Heart left ventricle (tissue), 16 donors: ENCODE measurements at regions of chr2 and their contacts with region 1.

Region 1: GRCh38 chr2:98412751-98413458 is 31.8 kb upstream of the INPP4A start:
- DNase-seq: peak in 2 of 5 donors; percentile 32 to 40
- ATAC-seq: peak; percentile 75 to 91 (median 88)
- H3K4me3 ChIP-seq: no peak overlapping the region
- H3K27ac ChIP-seq: no peak overlapping the region
- H3K4me1 ChIP-seq: peaks cover 0 to 5% (median 0%) of the 10 kb centered on the region in 12 donors
- H3K27me3 ChIP-seq: no peaks in the 10 kb centered on the region
- CTCF ChIP-seq: peak; percentile 65 to 90 (median 80)
- POLR2A ChIP-seq: no peak

Region 2: DNA sequence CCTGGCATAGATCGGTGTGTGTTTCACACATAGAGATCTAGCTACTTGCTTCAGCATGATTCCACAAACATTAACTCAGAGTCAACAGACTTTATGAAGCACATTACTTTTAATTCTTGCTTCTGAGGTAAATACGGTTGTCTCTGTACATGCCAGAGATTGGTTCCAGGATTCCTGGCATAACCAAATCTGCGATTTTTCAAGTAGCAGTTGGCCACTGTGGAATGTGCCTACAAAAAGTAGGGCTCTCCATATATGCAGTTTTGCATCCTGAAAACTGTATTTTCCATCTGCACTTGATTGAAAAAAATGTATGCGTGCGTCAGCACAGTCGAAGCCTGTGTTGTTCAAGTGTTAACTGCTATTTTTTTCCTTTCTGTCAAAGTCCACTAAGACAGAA is 614.5 kb before region 1 on chr2:
- intact Hi-C with region 1: no loop called
- DNase-seq: no peak
- ATAC-seq: no peak
- H3K4me3 ChIP-seq: no peak overlapping the region
- H3K27ac ChIP-seq: no peak overlapping the region
- H3K4me1 ChIP-seq: no peaks in the 10 kb centered on the region
- H3K27me3 ChIP-seq: no peaks in the 10 kb centered on the region
- CTCF ChIP-seq: no peak
- POLR2A ChIP-seq: no peak

Region 3: GRCh38 chr2:98334439-98335078 is 78.3 kb before region 1 on chr2:
- intact Hi-C with region 1: no loop called
- DNase-seq: no peak
- ATAC-seq: no peak
- H3K4me3 ChIP-seq: no peak overlapping the region
- H3K27ac ChIP-seq: no peak overlapping the region
- H3K4me1 ChIP-seq: no peaks in the 10 kb centered on the region
- H3K27me3 ChIP-seq: peaks cover 0 to 8% (median 0%) of the 10 kb centered on the region in 9 donors
- CTCF ChIP-seq: no peak
- POLR2A ChIP-seq: no peak

Region 4: GRCh38 chr2:98524168-98524567 is 111.3 kb after region 1 on chr2:
- intact Hi-C with region 1: loop called in 9 of 10 experiments (anchors 2 to 10 kb)
- DNase-seq: no peak
- ATAC-seq: peak in 2 of 4 donors; percentile 53 to 56
- H3K4me3 ChIP-seq: no peak overlapping the region
- H3K27ac ChIP-seq: no peak overlapping the region
- H3K4me1 ChIP-seq: peaks cover 0 to 12% (median 0%) of the 10 kb centered on the region in 12 donors
- H3K27me3 ChIP-seq: no peaks in the 10 kb centered on the region
- CTCF ChIP-seq: no peak
- POLR2A ChIP-seq: no peak

Region 5: GRCh38 chr2:98601532-98602132 is 188.7 kb after region 1 on chr2:
- intact Hi-C with region 1: loop called in 9 of 10 experiments (anchors 2 to 5 kb)
- DNase-seq: no peak
- ATAC-seq: peak; percentile 63 to 86 (median 82)
- H3K4me3 ChIP-seq: no peak overlapping the region
- H3K27ac ChIP-seq: no peak overlapping the region
- H3K4me1 ChIP-seq: peaks cover 2 to 27% (median 15%) of the 10 kb centered on the region in 12 donors
- H3K27me3 ChIP-seq: no peaks in the 10 kb centered on the region
- CTCF ChIP-seq: peak; percentile 42 to 71 (median 57)
- POLR2A ChIP-seq: no peak

Region 6: GRCh38 chr2:98822301-98823164 is 409.6 kb after region 1 on chr2:
- intact Hi-C with region 1: loop called in 1 of 10 experiments (anchors 10 kb)
- DNase-seq: peak; percentile 74 to 87 (median 78)
- ATAC-seq: peak; percentile 77 to 89 (median 82)
- H3K4me3 ChIP-seq: peak overlapping the region; percentile 38 to 68 (median 54)
- H3K27ac ChIP-seq: peak overlapping the region; percentile 76 to 98 (median 92)
- H3K4me1 ChIP-seq: peaks cover 0 to 59% (median 31%) of the 10 kb centered on the region in 12 donors
- H3K27me3 ChIP-seq: peaks cover 0 to 7% (median 0%) of the 10 kb centered on the region in 9 donors
- CTCF ChIP-seq: peak in 9 of 12 donors; percentile 18 to 54 (median 35)
- POLR2A ChIP-seq: peak in 1 of 2 donors; percentile 28